IMR-90 (cell line): ENCODE measurements at regions of chr10 and their contacts with region 1.

Region 1: GRCh38 chr10:32958085-32959005 is at the start of gene ITGB1:
- DNase-seq: peak; percentile 95
- ATAC-seq: peak; percentile 88
- H3K4me3 ChIP-seq: peak within 1 kb of the TSS; percentile 100
- H3K27ac ChIP-seq: peak within 1 kb of the TSS; percentile 96
- H3K4me1 ChIP-seq: peaks cover 10% of the 10 kb centered on the region
- H3K27me3 ChIP-seq: no peaks in the 10 kb centered on the region
- CTCF ChIP-seq: no peak
- POLR2A ChIP-seq: peak; percentile 95
- RAD21 ChIP-seq: peak; percentile 14; the same call in 1 of the 2 replicates
- total RNA-seq, gene ITGB1: 1,331 and 2,388 TPM in 2 replicates

Region 2: DNA sequence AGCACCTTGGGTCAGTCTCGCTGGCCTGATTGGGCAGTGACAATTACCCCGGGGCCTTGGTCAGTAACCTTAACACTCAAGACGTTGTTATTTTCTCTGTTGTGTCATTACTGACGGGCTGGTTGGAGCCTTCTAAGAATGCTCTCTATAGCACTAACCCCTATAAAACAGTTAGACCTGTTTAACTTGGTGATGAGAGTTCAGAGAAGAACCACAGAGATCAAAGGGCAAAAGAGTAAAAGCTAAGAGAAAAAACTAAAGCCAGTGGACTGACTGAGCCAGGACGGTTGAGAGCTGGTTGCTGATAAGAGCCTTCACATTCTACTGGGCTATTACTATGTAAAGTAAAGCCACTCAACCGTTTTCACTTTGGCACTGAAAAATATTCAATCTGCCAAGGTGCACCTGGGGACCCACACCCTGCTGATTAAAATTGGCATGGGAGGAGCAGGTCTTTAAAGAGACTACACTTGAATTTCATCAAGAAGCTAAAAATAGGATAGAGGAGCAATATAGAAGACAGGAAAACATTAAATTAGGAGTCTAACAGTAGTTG is 13.3 kb after region 1 on chr10:
- CTCF ChIA-PET with region 1: interaction called, 3 read pairs
- POLR2A ChIA-PET with region 1: no interaction called
- dilution Hi-C with region 1: no loop called
- in situ Hi-C with region 1: no loop called
- intact Hi-C with region 1: loop called (anchors 1 kb)
- DNase-seq: no peak
- ATAC-seq: no peak
- H3K4me3 ChIP-seq: no peak overlapping the region
- H3K27ac ChIP-seq: no peak overlapping the region
- H3K4me1 ChIP-seq: peaks cover 3% of the 10 kb centered on the region; the same call in 1 of the 2 replicates
- H3K27me3 ChIP-seq: no peaks in the 10 kb centered on the region
- CTCF ChIP-seq: no peak
- POLR2A ChIP-seq: no peak
- RAD21 ChIP-seq: no peak

Region 3: DNA sequence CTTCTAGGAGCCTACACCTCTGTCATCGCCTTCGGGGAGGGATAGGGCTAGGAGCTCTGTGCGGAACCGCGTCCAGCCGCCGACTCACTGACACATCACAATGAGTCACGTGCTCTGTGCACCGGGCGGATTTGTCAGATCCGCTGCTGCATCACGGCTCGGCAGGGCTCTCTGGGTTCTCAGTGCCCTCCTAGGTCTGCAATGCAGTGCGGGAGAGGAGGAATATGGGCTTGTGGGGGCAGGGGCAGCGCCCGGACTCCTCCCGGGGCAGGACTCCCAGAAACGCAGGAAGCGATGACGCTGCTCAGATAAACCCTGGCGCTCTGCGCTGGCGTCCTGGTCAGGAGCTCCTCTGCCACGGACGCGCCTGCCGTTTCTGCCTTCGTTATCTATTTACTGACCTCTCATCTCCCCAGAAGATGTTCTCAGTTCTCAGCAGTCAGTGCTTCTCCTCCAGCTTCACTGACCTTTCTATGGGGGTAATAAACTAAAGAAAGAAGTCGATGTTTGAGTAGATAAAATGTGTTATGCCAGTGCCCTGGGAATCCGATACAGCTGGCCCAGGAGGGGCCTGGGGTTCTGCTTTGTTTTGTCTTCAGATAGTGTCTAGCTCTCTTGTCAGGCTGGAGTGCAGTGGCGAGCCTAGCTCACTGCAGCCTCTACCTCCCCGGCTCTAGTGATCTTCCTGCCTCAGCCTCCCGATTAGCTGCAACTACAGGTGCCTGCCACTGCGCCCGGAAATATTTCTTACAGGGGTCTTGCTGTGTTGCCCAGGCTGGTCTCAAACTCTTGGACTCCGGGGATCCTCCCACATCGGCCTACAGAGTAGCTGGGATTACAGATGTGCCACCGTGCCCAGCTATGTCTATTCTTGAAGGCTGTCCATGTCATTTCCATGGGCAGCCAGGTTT is 22.5 kb after region 1 on chr10:
- CTCF ChIA-PET with region 1: interaction called, 4 read pairs
- POLR2A ChIA-PET with region 1: interaction called, 7 read pairs
- dilution Hi-C with region 1: no loop called
- in situ Hi-C with region 1: no loop called
- intact Hi-C with region 1: loop called (anchors 1 kb)
- DNase-seq: peak; percentile 100
- ATAC-seq: peak; percentile 89
- H3K4me3 ChIP-seq: peak overlapping the region; percentile 57
- H3K27ac ChIP-seq: peak overlapping the region; percentile 90
- H3K4me1 ChIP-seq: peaks cover 23% of the 10 kb centered on the region
- H3K27me3 ChIP-seq: no peaks in the 10 kb centered on the region
- CTCF ChIP-seq: 0 out of 2 replicates have a peak, but pooled peaks have one; percentile 5
- POLR2A ChIP-seq: peak; percentile 97
- RAD21 ChIP-seq: peak; percentile 42; the same call in 1 of the 2 replicates